Sigmoid colon (tissue), 7 donors: ENCODE measurements at regions of chr1 and their contacts with region 1.

Region 1: DNA sequence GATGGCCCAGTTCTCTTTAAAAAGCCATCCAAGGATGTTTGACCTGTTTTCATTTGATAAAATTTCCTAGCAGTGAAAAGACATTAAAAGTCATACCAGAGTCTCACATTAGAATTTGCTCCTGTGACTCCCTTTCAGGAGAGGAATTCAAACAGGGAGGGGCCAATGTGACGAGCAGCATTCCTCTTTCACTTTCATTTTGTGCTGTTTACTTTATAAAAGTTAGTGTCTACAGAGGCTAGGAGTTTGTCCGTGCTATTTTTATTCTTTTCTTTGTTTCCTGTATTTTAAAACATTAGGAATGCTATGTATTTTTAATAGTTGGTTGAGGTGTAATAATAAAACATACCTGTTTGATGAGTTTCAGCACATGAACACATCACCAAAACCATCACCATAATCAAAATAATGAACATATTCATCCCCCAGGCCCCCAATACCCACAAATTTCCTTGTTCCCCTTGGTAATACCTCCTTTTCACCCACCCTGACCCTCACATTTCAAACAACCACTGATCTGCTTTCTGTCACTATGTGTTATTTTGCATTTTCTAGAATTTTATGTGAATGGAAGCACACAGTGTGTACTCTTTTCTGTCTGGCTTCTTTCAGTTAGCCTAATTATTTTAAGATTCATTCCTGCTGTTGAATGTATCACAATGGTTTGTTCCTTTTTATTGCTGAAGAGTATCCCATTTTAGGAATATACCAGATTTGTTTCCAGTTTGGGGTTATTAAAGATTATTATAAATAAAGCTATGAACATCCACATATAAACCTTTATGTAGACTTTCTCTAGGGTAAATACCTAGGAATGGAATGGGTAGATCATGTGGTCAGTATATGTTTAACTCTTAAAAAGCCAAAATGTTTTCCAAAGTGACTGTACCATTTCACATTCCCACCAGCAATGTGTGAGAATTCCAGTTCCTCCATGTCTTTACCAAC is 129.5 kb downstream of the TENT5C start:
- DNase-seq: no peak
- H3K4me3 ChIP-seq: peak overlapping the region; percentile 8 to 26 (median 12)
- H3K27ac ChIP-seq: peak overlapping the region; percentile 63 to 75 (median 70)
- H3K4me1 ChIP-seq: peaks cover 0 to 26% (median 22%) of the 10 kb centered on the region in 4 donors
- H3K27me3 ChIP-seq: no peaks in the 10 kb centered on the region
- CTCF ChIP-seq: no peak
- EP300 ChIP-seq: no peak
- POLR2A ChIP-seq: no peak

Region 2: GRCh38 chr1:117562581-117563520 is 172.5 kb before region 1 on chr1:
- intact Hi-C with region 1: no loop called
- DNase-seq: no peak
- H3K4me3 ChIP-seq: no peak overlapping the region
- H3K27ac ChIP-seq: no peak overlapping the region
- H3K4me1 ChIP-seq: no peaks in the 10 kb centered on the region
- H3K27me3 ChIP-seq: no peaks in the 10 kb centered on the region
- CTCF ChIP-seq: no peak
- EP300 ChIP-seq: no peak
- POLR2A ChIP-seq: no peak

Region 3: DNA sequence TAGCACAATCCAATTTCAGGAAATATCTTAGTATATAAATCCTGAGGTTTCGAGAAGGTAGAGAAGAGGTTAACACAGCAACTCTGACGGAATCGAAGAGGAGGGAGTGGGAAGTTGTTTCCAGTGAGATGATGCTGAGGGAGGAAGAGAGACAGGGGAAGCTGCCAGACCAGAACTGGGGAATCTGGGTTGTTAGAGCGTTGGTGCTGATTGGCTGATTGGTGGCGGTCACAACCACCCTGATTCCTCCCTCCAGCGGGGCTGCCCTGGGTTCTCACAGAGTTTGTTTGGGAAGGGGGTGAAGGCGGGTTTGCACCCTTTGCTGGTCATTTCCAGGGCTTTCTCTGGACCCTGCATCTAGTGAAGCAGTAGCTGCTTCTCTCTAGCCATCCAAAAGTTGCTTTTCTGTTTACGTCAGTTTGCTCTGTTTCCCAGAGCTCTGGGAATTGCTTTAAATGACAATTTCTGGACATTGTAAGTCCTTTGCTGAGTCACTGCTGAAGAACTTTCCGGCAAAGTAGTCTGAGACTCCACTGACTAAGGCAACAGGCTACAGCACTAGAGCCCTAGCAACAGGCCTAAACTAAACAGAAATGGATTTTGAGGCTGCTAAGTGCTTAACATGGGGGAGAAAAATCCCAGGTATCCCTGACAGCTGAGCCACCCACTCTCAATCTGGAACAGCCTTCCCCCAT is 39.4 kb before region 1 on chr1:
- intact Hi-C with region 1: loop called (anchors 5 kb)
- DNase-seq: peak; percentile 76
- H3K4me3 ChIP-seq: peak overlapping the region in 2 of 4 donors; percentile 28 to 30
- H3K27ac ChIP-seq: peak overlapping the region; percentile 81 to 88 (median 84)
- H3K4me1 ChIP-seq: peaks cover 0 to 55% (median 50%) of the 10 kb centered on the region in 4 donors
- H3K27me3 ChIP-seq: no peaks in the 10 kb centered on the region
- CTCF ChIP-seq: no peak
- EP300 ChIP-seq: peak in 2 of 4 donors; percentile 68 to 70
- POLR2A ChIP-seq: no peak